AG04449 (cell line): ENCODE measurements at regions of chr15 and their contacts with region 1.

Region 1: DNA sequence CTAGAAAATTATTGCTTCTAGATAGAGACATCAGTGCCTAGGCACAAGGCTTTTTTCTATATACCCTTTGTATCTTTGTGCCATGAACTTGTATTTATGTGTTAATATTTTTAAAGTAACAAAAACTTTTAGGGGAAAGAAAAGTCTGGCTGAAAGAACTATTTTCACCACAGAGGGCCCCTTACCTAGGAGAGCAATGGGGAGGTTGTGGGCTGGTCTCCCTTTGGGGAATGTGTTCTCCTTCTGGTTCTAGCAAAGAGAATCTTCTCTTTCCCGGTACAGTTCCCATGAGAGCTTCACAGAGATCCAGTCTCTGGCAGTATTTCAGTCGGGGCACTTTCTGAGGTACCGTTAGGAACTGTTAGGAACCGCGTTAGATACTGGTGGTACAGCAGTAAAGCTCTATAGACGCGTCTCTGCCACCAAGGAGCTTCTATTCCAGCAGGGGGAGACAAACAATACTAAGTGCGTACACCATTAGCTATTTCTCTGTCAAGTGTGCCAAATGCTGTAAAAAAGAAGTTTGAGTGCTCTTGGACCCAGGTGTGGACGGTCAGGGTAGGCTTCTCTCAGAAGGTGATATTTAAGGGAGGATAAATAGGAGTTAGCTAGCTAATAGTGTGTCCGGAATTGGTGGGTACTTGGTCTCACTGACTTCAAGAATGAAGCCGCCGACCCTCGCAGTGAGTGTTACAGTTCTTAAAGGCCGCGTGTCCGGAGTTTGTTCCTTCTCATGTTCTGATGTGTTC is 4.6 kb upstream of the EPB42 start:
- DNase-seq: no peak
- H3K4me3 ChIP-seq: no peak overlapping the region
- CTCF ChIP-seq: peak; percentile 71

Region 2: GRCh38 chr15:43185157-43186017 is 40.0 kb before region 1 on chr15 and contains the start of gene CCNDBP1:
- CTCF ChIA-PET with region 1: interaction called, 10 read pairs
- POLR2A ChIA-PET with region 1: no interaction called
- DNase-seq: no peak
- H3K4me3 ChIP-seq: peak within 1 kb of the TSS; percentile 73
- CTCF ChIP-seq: peak; percentile 47

Region 3: GRCh38 chr15:43204016-43204901 is 21.1 kb before region 1 on chr15:
- CTCF ChIA-PET with region 1: interaction called, 34 read pairs
- POLR2A ChIA-PET with region 1: no interaction called
- DNase-seq: no peak
- H3K4me3 ChIP-seq: no peak overlapping the region
- CTCF ChIP-seq: peak; percentile 79

Region 4: GRCh38 chr15:43241100-43241499 is 15.7 kb after region 1 on chr15:
- CTCF ChIA-PET with region 1: interaction called, 23 read pairs
- POLR2A ChIA-PET with region 1: no interaction called
- DNase-seq: no peak
- H3K4me3 ChIP-seq: no peak overlapping the region
- CTCF ChIP-seq: no peak

Region 5: GRCh38 chr15:43268111-43269105 is 43.0 kb after region 1 on chr15:
- CTCF ChIA-PET with region 1: interaction called, 121 read pairs
- POLR2A ChIA-PET with region 1: no interaction called
- DNase-seq: no peak
- H3K4me3 ChIP-seq: no peak overlapping the region
- CTCF ChIP-seq: peak; percentile 26

Region 6: GRCh38 chr15:43275740-43276562 is 50.6 kb after region 1 on chr15:
- CTCF ChIA-PET with region 1: interaction called, 434 read pairs
- POLR2A ChIA-PET with region 1: no interaction called
- DNase-seq: no peak
- H3K4me3 ChIP-seq: no peak overlapping the region
- CTCF ChIP-seq: no peak

Region 7: DNA sequence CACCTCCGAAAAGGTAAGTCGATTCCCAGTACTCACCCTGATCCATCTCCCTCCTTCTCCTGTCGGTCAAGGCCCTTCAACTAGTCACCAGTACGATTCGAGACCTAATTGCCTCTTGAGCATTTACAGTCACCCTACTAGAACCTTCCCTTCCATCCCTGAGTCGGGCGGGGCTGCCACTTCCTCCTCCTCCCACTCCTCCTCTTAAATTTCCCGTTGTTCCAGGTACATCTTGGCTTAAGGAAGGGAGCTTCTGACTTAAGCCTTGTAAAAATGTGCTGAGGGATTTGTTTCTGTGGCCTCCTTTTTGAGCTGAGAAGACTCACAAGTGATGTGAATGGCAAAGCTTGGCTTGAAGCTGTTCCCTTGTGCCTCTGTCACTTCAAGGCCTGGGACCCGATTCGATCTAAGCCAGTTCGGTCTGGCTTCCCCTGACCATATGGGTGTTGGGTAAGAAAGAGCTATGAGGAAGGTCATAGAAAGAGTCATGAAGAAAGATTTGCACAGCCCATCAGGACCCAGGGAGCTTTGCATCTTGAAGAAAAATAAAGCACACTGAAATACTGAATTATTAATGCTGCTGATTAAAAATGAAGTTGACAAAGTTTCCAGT is 76.9 kb after region 1 on chr15:
- CTCF ChIA-PET with region 1: interaction called, 14 read pairs
- POLR2A ChIA-PET with region 1: no interaction called
- DNase-seq: no peak
- H3K4me3 ChIP-seq: no peak within 1 kb of the TSS
- CTCF ChIP-seq: no peak